SK-N-SH (cell line): ENCODE measurements at regions of chr3 and their contacts with region 1.

Region 1: DNA sequence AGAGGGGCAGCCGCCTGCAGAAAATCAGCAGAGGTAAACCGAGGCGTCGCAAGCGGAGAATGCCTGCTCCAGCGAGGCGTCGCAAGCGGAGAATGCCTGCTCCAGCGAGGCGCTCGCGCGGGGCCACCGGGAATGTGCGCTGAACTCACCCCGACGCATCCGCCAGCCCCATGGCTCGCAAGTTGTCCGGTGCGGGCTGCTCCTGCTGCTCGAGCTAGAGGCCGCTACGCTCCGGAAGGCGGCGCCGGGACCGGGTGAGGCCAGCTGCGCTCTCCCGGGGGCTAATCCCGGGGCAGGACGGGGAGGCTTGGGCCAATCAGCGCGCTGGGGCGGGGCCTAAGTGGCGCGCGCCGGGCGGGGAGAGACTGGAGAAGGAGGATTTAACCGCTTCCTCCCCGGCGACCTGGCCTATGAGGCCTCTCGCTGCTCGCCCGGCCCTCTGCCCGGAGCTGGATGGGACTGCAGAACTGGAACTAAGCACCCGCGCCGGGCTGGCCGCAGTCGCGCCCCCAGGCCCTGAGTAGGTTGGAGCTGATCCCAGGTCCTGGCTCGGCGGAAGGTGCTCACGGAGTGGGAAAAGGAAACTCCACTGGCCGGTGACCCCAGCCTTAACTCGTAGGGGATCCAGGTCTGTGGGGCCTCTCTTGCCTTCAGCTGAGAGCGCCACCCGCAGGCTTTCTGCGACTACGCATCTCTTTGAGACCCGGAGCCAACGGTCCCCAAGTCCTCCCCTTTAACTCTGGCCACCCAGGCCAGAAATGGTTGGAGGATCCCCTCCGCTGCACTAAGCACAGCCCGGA is at the start of gene SLC26A6:
- DNase-seq: peak; percentile 100
- H3K4me3 ChIP-seq: peak within 1 kb of the TSS; percentile 96 to 99
- H3K27ac ChIP-seq: peak within 1 kb of the TSS; percentile 72 to 85
- H3K4me1 ChIP-seq: peaks cover 16 to 23% of the 10 kb centered on the region in 2 experiments
- H3K27me3 ChIP-seq: no peaks in the 10 kb centered on the region
- CTCF ChIP-seq: peak; percentile 76
- EP300 ChIP-seq: no peak; a peak in 1 of 4 replicates
- RAD21 ChIP-seq: peak; percentile 46
- polyA plus RNA-seq, gene SLC26A6: 31.9 and 39.6 TPM in 2 replicates

Region 2: GRCh38 chr3:48556793-48557626 is 78.4 kb before region 1 on chr3 and contains the start of gene PFKFB4:
- CTCF ChIA-PET with region 1: interaction called, 22 read pairs
- POLR2A ChIA-PET with region 1: interaction called, 6 read pairs
- DNase-seq: peak; percentile 99
- H3K4me3 ChIP-seq: peak within 1 kb of the TSS; percentile 57 to 77
- H3K27ac ChIP-seq: peak within 1 kb of the TSS; percentile 48 to 49
- H3K4me1 ChIP-seq: peaks cover 29 to 61% of the 10 kb centered on the region in 2 experiments; a peak in 3 of 4 replicates
- H3K27me3 ChIP-seq: no peaks in the 10 kb centered on the region
- CTCF ChIP-seq: no peak
- EP300 ChIP-seq: no peak
- RAD21 ChIP-seq: no peak
- polyA plus RNA-seq, gene PFKFB4: 5.7 and 6.7 TPM in 2 replicates

Region 3: DNA sequence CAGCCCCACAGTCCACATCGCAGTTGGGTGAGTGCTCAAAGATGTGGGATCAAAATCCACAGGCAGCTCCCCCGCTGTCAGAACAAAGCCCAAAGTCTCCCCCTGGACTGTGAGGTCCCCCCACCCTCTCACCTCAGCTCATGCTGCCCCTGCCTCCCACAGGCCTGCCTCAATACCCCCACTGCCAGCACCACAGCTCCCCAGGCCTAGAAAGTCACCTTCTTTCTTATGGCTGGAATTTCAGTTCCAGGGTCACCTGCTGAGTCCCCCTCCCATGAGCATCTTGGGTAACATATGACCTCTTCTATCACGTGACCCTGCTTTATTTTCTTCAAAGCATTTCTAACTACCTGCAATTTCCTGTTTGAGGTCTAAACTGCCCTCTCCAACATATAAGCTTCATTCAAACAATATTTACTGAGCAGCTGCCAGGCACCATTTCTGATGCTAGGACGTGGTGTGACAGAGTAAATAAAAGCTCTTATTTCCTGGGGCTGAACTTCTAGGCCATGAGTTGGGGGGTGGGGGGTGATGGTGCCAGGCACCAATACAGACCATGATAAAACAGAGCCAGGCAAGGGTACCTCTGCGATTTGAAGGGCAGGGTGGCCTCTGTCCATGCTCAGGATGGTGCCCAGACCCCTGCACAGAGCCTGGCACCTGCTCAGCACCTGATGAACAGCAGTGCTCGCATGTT is 11.4 kb before region 1 on chr3:
- CTCF ChIA-PET with region 1: interaction called, 17 read pairs
- POLR2A ChIA-PET with region 1: interaction called, 3 read pairs
- DNase-seq: no peak
- H3K4me3 ChIP-seq: no peak overlapping the region
- H3K27ac ChIP-seq: no peak overlapping the region
- H3K4me1 ChIP-seq: no peaks in the 10 kb centered on the region
- H3K27me3 ChIP-seq: no peaks in the 10 kb centered on the region
- CTCF ChIP-seq: no peak
- EP300 ChIP-seq: no peak
- RAD21 ChIP-seq: no peak

Region 4: DNA sequence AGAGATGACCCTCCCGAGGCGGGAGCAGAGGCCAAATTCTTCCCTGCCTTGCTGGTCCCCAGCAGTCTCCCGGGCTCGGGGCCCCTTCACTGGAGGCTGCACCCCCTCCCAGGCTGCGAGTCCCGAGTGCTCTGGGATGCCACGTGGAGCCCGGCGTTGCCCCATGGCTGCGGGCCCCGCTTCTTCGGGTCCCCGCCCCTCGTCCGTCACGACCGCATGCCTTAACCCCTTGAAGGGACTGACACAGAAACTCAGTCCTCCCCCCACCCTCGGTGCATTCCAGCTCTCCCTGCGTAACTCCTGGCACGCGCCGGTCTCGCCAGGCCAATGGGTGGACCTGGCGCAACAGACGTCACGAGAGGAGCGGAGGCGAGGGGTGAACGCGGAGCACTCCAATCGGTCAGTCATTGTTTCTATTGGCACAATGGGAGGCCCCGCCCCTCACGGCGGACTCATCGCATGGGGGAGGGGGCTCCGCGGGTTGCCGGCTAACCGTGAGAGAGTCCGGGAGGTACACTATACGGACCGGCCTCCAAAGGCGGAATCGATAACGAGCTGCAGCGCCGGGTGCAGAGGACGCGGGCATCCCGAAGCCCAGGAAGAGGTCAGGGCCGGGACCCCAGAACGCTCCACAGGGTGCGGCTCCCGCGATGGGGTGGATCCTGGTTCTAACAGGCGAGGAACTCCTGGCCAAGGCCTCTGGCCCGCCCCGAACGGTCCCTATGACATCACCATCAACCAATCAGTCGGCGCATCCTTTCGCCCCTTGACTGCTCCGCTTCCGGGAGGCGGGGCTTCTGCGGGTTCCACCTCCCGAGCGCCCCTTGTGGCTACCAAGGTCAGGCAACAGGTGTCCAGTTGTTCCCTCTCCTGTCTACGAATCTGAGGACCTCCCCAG is 28.2 kb after region 1 on chr3:
- CTCF ChIA-PET with region 1: interaction called, 33 read pairs
- POLR2A ChIA-PET with region 1: interaction called, 15 read pairs
- DNase-seq: peak; percentile 96
- H3K4me3 ChIP-seq: peak overlapping the region; percentile 61 to 77
- H3K27ac ChIP-seq: peak overlapping the region; percentile 96 to 99
- H3K4me1 ChIP-seq: peaks cover 4 to 18% of the 10 kb centered on the region in 2 experiments; a peak in 2 of 4 replicates
- H3K27me3 ChIP-seq: no peaks in the 10 kb centered on the region
- CTCF ChIP-seq: peak; percentile 86
- EP300 ChIP-seq: no peak
- RAD21 ChIP-seq: no peak